ENCODE measurements at regions of chr1 and their contacts with region 1.

Region 1: DNA sequence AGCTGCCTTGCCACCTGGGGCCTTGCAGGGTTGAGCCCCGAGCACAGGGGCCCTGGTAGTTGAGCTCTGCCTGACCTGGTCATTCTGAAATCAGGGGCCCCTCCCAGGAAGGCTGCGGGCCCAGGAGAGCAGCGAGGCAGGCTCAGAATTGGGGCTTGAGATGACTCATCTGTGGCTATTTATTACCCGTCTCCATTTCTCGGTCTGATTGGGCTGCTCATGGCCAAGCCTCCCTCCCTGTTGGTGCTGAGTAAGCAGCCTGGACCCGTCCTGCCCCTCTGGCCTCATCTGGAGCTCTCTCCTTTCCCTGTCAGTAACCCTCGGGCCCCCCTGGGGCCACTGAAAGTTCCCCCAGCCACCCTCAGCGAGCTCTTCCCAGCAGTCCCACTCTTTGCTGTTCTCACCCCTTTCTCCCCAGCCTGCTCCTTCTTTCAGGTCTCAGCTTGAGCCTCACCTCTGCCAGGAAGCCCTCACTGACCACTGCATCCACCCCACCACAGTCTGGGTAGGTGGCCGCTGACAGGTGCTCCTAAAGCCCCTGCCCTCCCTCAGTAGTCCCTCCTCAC is 11.0 kb upstream of the TNFRSF8 start:
- DNase-seq: peak; percentile 80
- H3K4me3 Mint-ChIP-seq: no peak overlapping the region
- H3K27ac Mint-ChIP-seq: peak overlapping the region; percentile 49
- H3K4me1 Mint-ChIP-seq: peaks cover 50% of the 10 kb centered on the region
- H3K27me3 Mint-ChIP-seq: peaks cover 8% of the 10 kb centered on the region

Region 2: DNA sequence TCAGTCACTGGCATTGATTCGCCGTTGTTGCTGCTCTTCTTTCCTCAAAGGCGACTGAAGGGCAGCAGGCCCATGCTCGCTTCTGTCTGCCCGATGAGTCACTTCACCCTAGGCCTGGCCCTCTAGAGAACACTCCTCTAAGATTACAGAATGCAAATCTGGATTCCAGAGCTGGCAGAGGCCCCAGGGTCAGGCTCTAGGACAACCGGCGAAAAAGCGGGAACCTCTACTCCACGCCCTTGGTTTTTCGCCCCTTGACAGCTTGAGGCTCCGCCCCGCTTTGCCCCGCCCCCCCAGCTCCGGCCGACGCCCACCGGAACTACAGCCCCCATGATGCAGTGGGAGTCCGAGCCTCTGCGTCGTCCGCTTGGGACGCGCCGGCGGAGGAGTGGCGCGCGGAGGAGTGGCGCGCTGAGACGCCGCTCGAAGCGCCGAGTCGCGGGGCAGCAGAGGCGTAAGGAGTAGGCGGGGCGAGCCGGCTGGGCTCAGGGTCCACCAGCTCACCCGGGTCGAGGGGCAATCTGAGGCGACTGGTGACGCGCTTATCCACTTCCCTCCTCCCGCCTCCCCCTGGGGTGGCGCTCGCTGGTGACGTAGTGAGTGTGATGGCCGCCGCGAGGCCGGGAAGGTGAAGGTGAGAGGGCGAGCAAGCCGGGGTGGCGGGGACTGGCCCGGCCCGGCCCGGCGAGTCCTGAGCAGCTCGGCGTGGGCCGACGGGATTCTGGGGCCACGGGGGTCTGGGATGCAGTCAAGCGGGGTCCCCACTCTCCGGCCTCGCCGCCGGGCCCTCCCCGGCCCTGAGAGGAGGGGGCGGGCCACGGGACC is 72.0 kb before region 1 on chr1 and contains the start of gene MFN2:
- CTCF ChIA-PET with region 1: no interaction called
- POLR2A ChIA-PET with region 1: no interaction called
- intact Hi-C with region 1: no loop called
- DNase-seq: peak; percentile 95
- H3K4me3 Mint-ChIP-seq: peak within 1 kb of the TSS; percentile 90
- H3K27ac Mint-ChIP-seq: peak within 1 kb of the TSS; percentile 90
- H3K4me1 Mint-ChIP-seq: peaks cover 41% of the 10 kb centered on the region
- H3K27me3 Mint-ChIP-seq: no peaks in the 10 kb centered on the region
- total RNA-seq, gene MFN2: 52.0 to 58.1 TPM

Region 3: DNA sequence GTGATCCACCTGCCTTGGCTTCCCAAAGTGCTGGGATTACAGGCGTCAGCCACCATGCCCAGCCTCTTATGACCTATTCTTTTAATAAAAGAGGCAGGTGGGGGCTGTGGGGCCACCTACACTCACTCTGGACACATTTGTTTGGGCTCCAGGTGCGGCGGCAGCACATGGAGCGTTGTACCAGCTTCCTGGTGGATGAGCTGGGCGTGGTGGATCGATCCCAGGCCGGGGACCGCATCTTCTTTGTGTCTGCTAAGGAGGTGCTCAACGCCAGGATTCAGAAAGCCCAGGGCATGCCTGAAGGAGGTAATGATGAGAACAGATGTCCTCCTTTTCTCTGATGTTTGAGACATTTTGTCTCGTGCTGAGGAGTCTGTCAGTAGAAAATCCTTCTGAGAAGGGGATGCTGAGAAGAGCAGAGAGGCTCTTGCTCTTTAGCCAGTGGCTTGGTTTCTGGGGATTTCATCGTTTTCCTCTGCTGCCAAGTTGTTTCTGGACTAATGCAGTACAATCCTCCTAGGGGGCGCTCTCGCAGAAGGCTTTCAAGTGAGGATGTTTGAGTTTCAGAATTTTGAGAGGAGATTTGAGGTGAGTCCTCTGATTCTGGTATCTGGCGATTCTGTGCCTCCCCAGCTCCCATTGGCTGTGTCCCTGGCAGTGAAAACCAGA is 50.7 kb before region 1 on chr1:
- CTCF ChIA-PET with region 1: no interaction called
- POLR2A ChIA-PET with region 1: no interaction called
- intact Hi-C with region 1: loop called (anchors 1 kb)
- DNase-seq: peak; percentile 79
- H3K4me3 Mint-ChIP-seq: no peak overlapping the region
- H3K27ac Mint-ChIP-seq: peak overlapping the region; percentile 60
- H3K4me1 Mint-ChIP-seq: peaks cover 3% of the 10 kb centered on the region
- H3K27me3 Mint-ChIP-seq: no peaks in the 10 kb centered on the region

Region 4: GRCh38 chr1:12040457-12041051 is 11.5 kb before region 1 on chr1:
- CTCF ChIA-PET with region 1: interaction called, 6 read pairs
- POLR2A ChIA-PET with region 1: interaction called, 4 read pairs
- intact Hi-C with region 1: loop called (anchors 1 kb)
- DNase-seq: peak; percentile 66
- H3K4me3 Mint-ChIP-seq: no peak overlapping the region
- H3K27ac Mint-ChIP-seq: peak overlapping the region; percentile 46
- H3K4me1 Mint-ChIP-seq: peaks cover 43% of the 10 kb centered on the region
- H3K27me3 Mint-ChIP-seq: peaks cover 3% of the 10 kb centered on the region

Region 5: DNA sequence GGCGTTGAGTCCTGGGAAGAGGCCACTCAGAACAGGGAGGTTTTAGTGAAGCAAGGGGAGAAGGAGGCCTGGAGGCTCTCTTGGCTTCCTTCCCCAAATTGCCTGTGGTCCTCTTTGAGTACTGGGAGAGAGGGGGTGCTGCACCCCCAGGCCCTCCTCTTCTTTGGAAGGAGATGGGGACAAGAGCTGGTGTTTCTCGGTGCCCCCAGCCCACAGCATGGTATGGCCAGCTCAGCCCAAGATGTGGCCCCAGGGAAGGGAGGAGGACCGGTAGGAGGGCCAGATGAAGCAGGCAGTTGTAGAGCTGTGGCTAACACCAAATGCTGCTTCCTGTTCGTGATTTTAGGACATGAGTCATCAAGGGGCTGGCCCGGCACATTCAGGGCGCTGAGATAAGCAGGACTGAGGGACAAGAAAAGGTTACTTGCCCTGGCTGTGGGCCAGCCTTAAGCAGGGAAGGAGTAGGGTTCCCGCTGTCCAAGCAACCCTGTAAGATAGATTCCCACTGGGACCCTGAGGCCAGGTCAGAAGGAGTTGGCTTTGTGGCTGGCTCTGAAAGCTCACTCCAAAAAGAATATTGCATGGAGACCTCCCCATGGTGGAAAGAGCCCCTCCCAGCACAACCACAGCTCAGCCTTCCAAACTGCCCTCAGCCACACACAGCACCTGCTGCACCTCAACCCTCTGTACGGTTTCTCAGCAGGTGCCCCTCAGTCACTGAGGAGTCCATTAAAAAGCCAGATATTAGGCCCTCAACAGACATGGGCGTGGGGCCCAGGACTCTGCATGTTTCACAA is 109.8 kb after region 1 on chr1:
- CTCF ChIA-PET with region 1: no interaction called
- POLR2A ChIA-PET with region 1: no interaction called
- intact Hi-C with region 1: loop called (anchors 1 kb)
- DNase-seq: peak; percentile 92
- H3K4me3 Mint-ChIP-seq: no peak overlapping the region
- H3K27ac Mint-ChIP-seq: peak overlapping the region; percentile 90
- H3K4me1 Mint-ChIP-seq: peaks cover 80% of the 10 kb centered on the region
- H3K27me3 Mint-ChIP-seq: no peaks in the 10 kb centered on the region

Measured in activated CD4-positive, alpha-beta memory T cell treated with anti-CD3 and anti-CD28 coated beads for 36 hours (primary cell).